Activated B cell treated with CpG ODN at 0.5 μM for 24 hours (primary cell): ENCODE measurements at regions of chr22 and their contacts with region 1.

Region 1: DNA sequence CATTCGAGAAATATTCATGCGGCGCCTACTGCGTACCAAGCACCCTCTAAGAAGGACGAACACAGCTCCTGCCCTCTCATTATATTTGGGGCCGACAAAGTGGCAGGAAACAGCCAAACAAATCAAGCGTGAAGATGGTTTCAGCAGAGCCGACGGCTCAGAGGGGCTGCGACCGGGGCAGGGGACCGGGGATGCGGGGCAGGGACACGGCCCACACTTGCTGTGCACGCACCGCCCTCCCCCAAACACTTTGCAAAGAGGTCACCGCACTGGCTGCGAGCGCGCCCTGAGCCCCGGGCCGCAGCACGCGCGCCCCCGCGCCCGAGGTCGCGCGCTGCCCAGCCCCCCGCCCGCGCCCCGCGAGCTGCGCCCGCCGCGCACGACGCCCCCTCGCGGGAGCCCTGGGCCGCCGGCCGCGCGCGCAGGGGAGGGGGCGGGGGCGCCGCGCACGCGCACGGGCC is 255 bp upstream of the SYNGR1 start:
- DNase-seq: peak; percentile 47
- ATAC-seq: peak; percentile 9
- H3K4me3 Mint-ChIP-seq: peak overlapping the region; percentile 87
- H3K27ac Mint-ChIP-seq: peak overlapping the region; percentile 87
- H3K4me1 Mint-ChIP-seq: peaks cover 40% of the 10 kb centered on the region
- H3K27me3 Mint-ChIP-seq: peaks cover 2% of the 10 kb centered on the region
- CTCF ChIP-seq: no peak

Region 2: DNA sequence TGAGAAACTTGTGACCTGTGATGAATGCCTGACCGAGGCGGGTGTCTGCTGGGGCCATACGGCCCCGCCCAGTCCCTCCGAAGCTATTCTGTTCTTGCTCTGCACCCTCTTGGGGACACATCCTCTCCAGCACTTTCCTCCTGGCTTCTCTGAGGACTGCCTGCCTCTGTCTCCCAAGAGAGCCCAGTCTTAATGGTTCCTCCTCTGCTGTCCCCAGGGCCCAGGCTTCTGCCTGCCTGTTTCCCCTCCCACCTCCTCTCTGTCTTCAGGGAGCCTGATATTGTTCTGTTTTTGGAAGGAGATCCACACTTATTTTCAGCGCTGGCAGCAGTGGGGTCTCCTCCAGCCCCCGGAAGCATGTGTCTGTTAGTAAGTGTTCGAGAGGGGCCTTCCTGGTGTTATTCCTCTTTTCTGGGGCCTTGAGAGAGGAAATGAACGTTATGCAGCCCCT is 18.9 kb after region 1 on chr22:
- CTCF ChIA-PET with region 1: no interaction called
- POLR2A ChIA-PET with region 1: interaction called, 5 read pairs
- intact Hi-C with region 1: loop called (anchors 2 kb)
- DNase-seq: no peak
- ATAC-seq: peak; percentile 28
- H3K4me3 Mint-ChIP-seq: no peak overlapping the region
- H3K27ac Mint-ChIP-seq: peak overlapping the region; percentile 20
- H3K4me1 Mint-ChIP-seq: peaks cover 43% of the 10 kb centered on the region
- H3K27me3 Mint-ChIP-seq: no peaks in the 10 kb centered on the region
- CTCF ChIP-seq: no peak

Region 3: GRCh38 chr22:39388261-39389011 is 38.9 kb after region 1 on chr22:
- CTCF ChIA-PET with region 1: interaction called, 3 read pairs
- POLR2A ChIA-PET with region 1: interaction called, 10 read pairs
- intact Hi-C with region 1: loop called (anchors 1 kb)
- DNase-seq: peak; percentile 66
- ATAC-seq: peak; percentile 90
- H3K4me3 Mint-ChIP-seq: peak overlapping the region; percentile 86
- H3K27ac Mint-ChIP-seq: peak overlapping the region; percentile 86
- H3K4me1 Mint-ChIP-seq: peaks cover 17% of the 10 kb centered on the region
- H3K27me3 Mint-ChIP-seq: no peaks in the 10 kb centered on the region
- CTCF ChIP-seq: no peak